ENCODE measurements at regions of chr11 and their contacts with region 1.

Region 1: GRCh38 chr11:118791111-118791965 is at the start of gene DDX6:
- DNase-seq: peak; percentile 89 to 92 (median 91)
- H3K4me3 ChIP-seq: peak within 1 kb of the TSS; percentile 68 to 98
- H3K4me3 Mint-ChIP-seq: peak within 1 kb of the TSS; percentile 95 to 100 (median 99)
- H3K27ac ChIP-seq: peak within 1 kb of the TSS; percentile 99
- H3K27ac Mint-ChIP-seq: peak within 1 kb of the TSS; percentile 98 to 100 (median 99)
- H3K4me1 ChIP-seq: peaks cover 30% of the 10 kb centered on the region
- H3K4me1 Mint-ChIP-seq: peaks cover 9 to 54% (median 18%) of the 10 kb centered on the region in 4 donors
- H3K27me3 ChIP-seq: no peaks in the 10 kb centered on the region
- H3K27me3 Mint-ChIP-seq: no peaks in the 10 kb centered on the region
- total RNA-seq, gene DDX6: 299 to 304 TPM

Region 2: GRCh38 chr11:118649941-118650340 is 141.4 kb before region 1 on chr11:
- CTCF ChIA-PET with region 1: no interaction called
- POLR2A ChIA-PET with region 1: no interaction called
- intact Hi-C with region 1: no loop called
- DNase-seq: no peak
- H3K4me3 ChIP-seq: no peak overlapping the region
- H3K4me3 Mint-ChIP-seq: no peak overlapping the region
- H3K27ac ChIP-seq: no peak overlapping the region
- H3K27ac Mint-ChIP-seq: peak overlapping the region in 1 of 7 donors; percentile 2
- H3K4me1 ChIP-seq: peaks cover 8% of the 10 kb centered on the region
- H3K4me1 Mint-ChIP-seq: peaks cover 6 to 11% (median 10%) of the 10 kb centered on the region in 4 donors
- H3K27me3 ChIP-seq: no peaks in the 10 kb centered on the region
- H3K27me3 Mint-ChIP-seq: peaks cover 0 to 2% of the 10 kb centered on the region in 2 donors

Region 3: GRCh38 chr11:118689851-118690552 is 101.3 kb before region 1 on chr11:
- CTCF ChIA-PET with region 1: interaction called, 149 read pairs
- POLR2A ChIA-PET with region 1: interaction called, 99 read pairs
- intact Hi-C with region 1: loop called (anchors 1 kb)
- DNase-seq: peak; percentile 76 to 86 (median 83)
- H3K4me3 ChIP-seq: peak overlapping the region; percentile 44 to 75
- H3K4me3 Mint-ChIP-seq: peak overlapping the region; percentile 65 to 83 (median 76)
- H3K27ac ChIP-seq: peak overlapping the region; percentile 59
- H3K27ac Mint-ChIP-seq: peak overlapping the region in 6 of 7 donors; percentile 50 to 89 (median 78)
- H3K4me1 ChIP-seq: peaks cover 51% of the 10 kb centered on the region
- H3K4me1 Mint-ChIP-seq: peaks cover 37 to 67% (median 50%) of the 10 kb centered on the region in 4 donors
- H3K27me3 ChIP-seq: no peaks in the 10 kb centered on the region
- H3K27me3 Mint-ChIP-seq: peaks cover 0 to 3% of the 10 kb centered on the region in 2 donors

Region 4: GRCh38 chr11:118771547-118772288 is 19.6 kb before region 1 on chr11:
- CTCF ChIA-PET with region 1: interaction called, 43 read pairs
- POLR2A ChIA-PET with region 1: interaction called, 87 read pairs
- intact Hi-C with region 1: loop called (anchors 2 kb)
- DNase-seq: no peak
- H3K4me3 ChIP-seq: no peak overlapping the region
- H3K4me3 Mint-ChIP-seq: peak overlapping the region in 7 of 8 donors; percentile 32 to 75 (median 64)
- H3K27ac ChIP-seq: no peak overlapping the region
- H3K27ac Mint-ChIP-seq: peak overlapping the region in 6 of 7 donors; percentile 36 to 80 (median 78)
- H3K4me1 ChIP-seq: peaks cover 94% of the 10 kb centered on the region
- H3K4me1 Mint-ChIP-seq: peaks cover 57 to 97% (median 77%) of the 10 kb centered on the region in 4 donors
- H3K27me3 ChIP-seq: no peaks in the 10 kb centered on the region
- H3K27me3 Mint-ChIP-seq: no peaks in the 10 kb centered on the region

Region 5: GRCh38 chr11:118870396-118871345 is 79.3 kb after region 1 on chr11:
- CTCF ChIA-PET with region 1: interaction called, 44 read pairs
- POLR2A ChIA-PET with region 1: interaction called, 336 read pairs
- intact Hi-C with region 1: loop called (anchors 1 kb)
- DNase-seq: peak in 2 of 5 donors; percentile 50 to 60
- H3K4me3 ChIP-seq: peak overlapping the region in 1 of 2 donors; percentile 33
- H3K4me3 Mint-ChIP-seq: peak overlapping the region; percentile 80 to 89 (median 83)
- H3K27ac ChIP-seq: peak overlapping the region; percentile 82
- H3K27ac Mint-ChIP-seq: peak overlapping the region; percentile 96 to 100 (median 99)
- H3K4me1 ChIP-seq: peaks cover 66% of the 10 kb centered on the region
- H3K4me1 Mint-ChIP-seq: peaks cover 41 to 62% (median 49%) of the 10 kb centered on the region in 4 donors
- H3K27me3 ChIP-seq: no peaks in the 10 kb centered on the region
- H3K27me3 Mint-ChIP-seq: no peaks in the 10 kb centered on the region

Region 6: GRCh38 chr11:118907051-118908042 is 116.0 kb after region 1 on chr11:
- CTCF ChIA-PET with region 1: interaction called, 63 read pairs
- POLR2A ChIA-PET with region 1: no interaction called
- intact Hi-C with region 1: no loop called
- DNase-seq: peak; percentile 80 to 86 (median 83)
- H3K4me3 ChIP-seq: no peak overlapping the region
- H3K4me3 Mint-ChIP-seq: peak overlapping the region in 6 of 8 donors; percentile 0 to 85 (median 54)
- H3K27ac ChIP-seq: peak overlapping the region; percentile 40
- H3K27ac Mint-ChIP-seq: peak overlapping the region; percentile 91 to 96 (median 95)
- H3K4me1 ChIP-seq: peaks cover 55% of the 10 kb centered on the region
- H3K4me1 Mint-ChIP-seq: peaks cover 32 to 51% (median 42%) of the 10 kb centered on the region in 4 donors
- H3K27me3 ChIP-seq: no peaks in the 10 kb centered on the region
- H3K27me3 Mint-ChIP-seq: no peaks in the 10 kb centered on the region

Region 7: GRCh38 chr11:118979434-118979833 is 188.1 kb after region 1 on chr11:
- CTCF ChIA-PET with region 1: no interaction called
- POLR2A ChIA-PET with region 1: no interaction called
- intact Hi-C with region 1: no loop called
- DNase-seq: no peak
- H3K4me3 ChIP-seq: no peak overlapping the region
- H3K4me3 Mint-ChIP-seq: no peak overlapping the region
- H3K27ac ChIP-seq: no peak overlapping the region
- H3K27ac Mint-ChIP-seq: peak overlapping the region in 1 of 7 donors; percentile 7
- H3K4me1 ChIP-seq: no peaks in the 10 kb centered on the region
- H3K4me1 Mint-ChIP-seq: peaks cover 0 to 1% (median 0%) of the 10 kb centered on the region in 4 donors
- H3K27me3 ChIP-seq: no peaks in the 10 kb centered on the region
- H3K27me3 Mint-ChIP-seq: peaks cover 7 to 8% of the 10 kb centered on the region in 2 donors

Region 8: GRCh38 chr11:119018074-119018938 is 227.0 kb after region 1 on chr11 and contains the starts of genes RPS25 and TRAPPC4:
- CTCF ChIA-PET with region 1: interaction called, 4 read pairs
- POLR2A ChIA-PET with region 1: interaction called, 11 read pairs
- intact Hi-C with region 1: loop called (anchors 1 kb)
- DNase-seq: peak; percentile 96 to 98 (median 97)
- H3K4me3 ChIP-seq: peak within 1 kb of the TSS; percentile 71 to 96
- H3K4me3 Mint-ChIP-seq: peak within 1 kb of the TSS; percentile 94 to 100 (median 99)
- H3K27ac ChIP-seq: peak within 1 kb of the TSS; percentile 87
- H3K27ac Mint-ChIP-seq: peak within 1 kb of the TSS; percentile 98 to 100 (median 100)
- H3K4me1 ChIP-seq: peaks cover 52% of the 10 kb centered on the region
- H3K4me1 Mint-ChIP-seq: peaks cover 21 to 73% (median 51%) of the 10 kb centered on the region in 4 donors
- H3K27me3 ChIP-seq: no peaks in the 10 kb centered on the region
- H3K27me3 Mint-ChIP-seq: no peaks in the 10 kb centered on the region
- total RNA-seq, gene RPS25: 2,545 to 2,705 TPM
- total RNA-seq, gene TRAPPC4: 89.2 to 97.3 TPM

Region 9: DNA sequence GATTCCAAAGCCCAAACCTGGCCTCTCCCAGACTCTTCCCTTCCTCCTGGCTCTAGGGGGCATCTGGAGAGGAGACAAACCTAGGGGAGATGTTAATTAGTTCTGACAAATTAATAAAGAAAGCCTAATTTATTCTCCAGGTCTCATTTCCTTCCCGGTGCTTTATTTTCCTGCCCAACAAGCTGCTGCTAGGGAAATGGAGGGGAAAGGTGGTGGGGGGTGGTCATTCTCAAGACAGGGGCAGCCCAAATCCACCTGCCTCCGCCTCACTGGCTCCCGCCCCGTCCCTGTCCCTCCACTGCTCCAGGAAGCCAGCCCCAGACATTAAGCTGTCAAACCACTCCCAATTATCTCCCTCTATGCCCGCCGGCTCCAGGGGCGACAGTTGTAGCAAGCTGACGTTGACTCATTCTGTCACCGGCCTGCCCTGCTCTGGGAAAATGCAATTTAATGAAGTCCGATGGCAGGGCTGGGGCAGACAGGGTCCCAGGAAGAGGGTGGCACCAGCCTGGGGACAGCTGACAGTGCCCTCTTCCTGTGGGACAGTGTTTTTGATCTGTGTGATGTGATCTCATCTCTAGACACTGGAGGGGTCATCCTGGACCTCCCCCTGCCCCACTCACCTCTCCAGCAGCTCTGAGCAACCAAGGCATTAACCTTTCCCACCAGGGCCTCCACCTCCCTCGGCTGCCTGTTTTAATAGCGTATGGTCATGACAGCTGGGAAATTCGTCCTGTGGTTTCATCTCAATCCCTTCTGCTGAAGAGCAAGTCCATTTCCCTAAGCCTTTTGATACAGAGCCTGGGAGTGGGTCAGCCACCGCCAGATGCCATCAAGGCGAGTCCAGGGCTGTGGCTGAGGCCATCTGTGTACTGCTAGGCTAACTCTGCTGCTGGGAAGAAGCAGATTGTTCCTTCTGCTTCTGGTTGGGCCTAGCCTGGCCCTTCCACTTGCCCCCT is 910.5 kb after region 1 on chr11:
- CTCF ChIA-PET with region 1: no interaction called
- POLR2A ChIA-PET with region 1: no interaction called
- intact Hi-C with region 1: no loop called
- DNase-seq: no peak
- H3K4me3 ChIP-seq: no peak overlapping the region
- H3K4me3 Mint-ChIP-seq: no peak overlapping the region
- H3K27ac ChIP-seq: no peak overlapping the region
- H3K27ac Mint-ChIP-seq: no peak overlapping the region
- H3K4me1 ChIP-seq: no peaks in the 10 kb centered on the region
- H3K4me1 Mint-ChIP-seq: no peaks in the 10 kb centered on the region
- H3K27me3 ChIP-seq: no peaks in the 10 kb centered on the region
- H3K27me3 Mint-ChIP-seq: peaks cover 0 to 2% of the 10 kb centered on the region in 2 donors